ENCODE measurements at regions of chr5 and their contacts with region 1.

Region 1: DNA sequence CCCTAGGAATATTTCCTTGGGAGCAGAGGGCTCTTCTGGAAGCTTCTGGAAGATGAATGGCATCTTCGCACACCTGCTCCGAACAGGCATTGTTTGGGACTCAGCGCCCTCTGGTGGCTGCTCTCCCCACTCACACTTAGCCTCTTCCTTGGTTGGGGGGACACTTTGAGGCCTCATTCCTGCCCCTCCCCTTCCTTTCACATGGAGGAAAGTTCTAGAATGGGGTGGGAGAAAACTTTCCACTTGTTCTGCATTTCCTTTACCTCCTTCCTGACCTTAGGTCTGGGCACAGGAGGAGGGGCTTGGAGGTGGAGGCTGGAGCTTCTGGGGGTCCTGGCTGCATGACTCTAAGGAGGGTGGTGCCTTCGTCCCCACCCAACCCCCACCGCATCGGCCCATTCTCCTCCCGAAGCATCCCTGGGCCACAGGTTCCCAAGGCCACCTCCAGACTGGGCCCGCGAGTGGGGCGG is 19.3 kb upstream of the SMIM32 start:
- DNase-seq: peak; percentile 53
- ATAC-seq: peak; percentile 50 to 58
- H3K4me3 ChIP-seq: no peak overlapping the region
- H3K27ac ChIP-seq: no peak overlapping the region
- H3K4me1 ChIP-seq: no peaks in the 10 kb centered on the region
- H3K27me3 ChIP-seq: peaks cover 19% of the 10 kb centered on the region
- CTCF ChIP-seq: peak; percentile 90

Region 2: DNA sequence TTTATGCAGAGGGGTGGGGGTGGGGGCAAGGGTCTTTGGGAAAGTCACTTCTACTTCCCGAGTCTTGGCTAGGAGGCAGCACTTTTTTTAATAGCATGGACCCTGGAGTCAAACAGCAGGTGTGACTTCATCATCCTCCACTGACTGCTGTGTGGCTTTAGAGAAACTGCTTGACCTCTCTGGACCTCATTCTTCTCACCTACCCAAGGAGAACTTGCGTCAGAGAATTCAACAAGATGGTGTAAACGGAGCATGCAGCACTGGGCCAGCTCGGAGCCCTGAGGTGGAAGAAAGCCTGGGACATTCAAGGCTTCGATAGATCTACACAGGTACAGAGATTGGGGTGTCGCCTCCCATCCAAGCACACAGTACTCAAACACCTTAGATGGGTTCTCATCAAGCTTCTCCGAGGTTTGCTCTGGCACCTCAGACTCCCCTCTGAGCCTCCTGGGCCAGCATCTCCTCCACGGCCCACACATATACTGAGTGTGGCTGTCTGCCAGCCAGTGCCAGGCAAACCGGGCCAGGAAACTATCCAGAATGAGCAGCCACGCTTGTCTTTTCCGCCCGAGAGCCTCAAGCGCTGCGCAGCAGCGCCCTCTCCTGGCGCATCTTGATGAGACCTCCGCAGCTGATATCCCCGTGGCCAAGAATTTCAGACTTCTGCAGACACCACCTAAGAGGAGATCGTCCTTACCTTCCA is 382.5 kb before region 1 on chr5:
- intact Hi-C with region 1: no loop called
- DNase-seq: peak; percentile 71
- ATAC-seq: peak; percentile 52 to 60
- H3K4me3 ChIP-seq: no peak overlapping the region
- H3K27ac ChIP-seq: no peak overlapping the region
- H3K4me1 ChIP-seq: peaks cover 7% of the 10 kb centered on the region
- H3K27me3 ChIP-seq: peaks cover 45% of the 10 kb centered on the region
- CTCF ChIP-seq: peak; percentile 61

Region 3: GRCh38 chr5:135887351-135887864 is 324.9 kb before region 1 on chr5:
- intact Hi-C with region 1: loop called (anchors 5 kb)
- DNase-seq: peak; percentile 56
- ATAC-seq: peak; percentile 87 to 92
- H3K4me3 ChIP-seq: no peak overlapping the region
- H3K27ac ChIP-seq: no peak overlapping the region
- H3K4me1 ChIP-seq: peaks cover 18% of the 10 kb centered on the region
- H3K27me3 ChIP-seq: peaks cover 14% of the 10 kb centered on the region
- CTCF ChIP-seq: peak; percentile 78

Region 4: DNA sequence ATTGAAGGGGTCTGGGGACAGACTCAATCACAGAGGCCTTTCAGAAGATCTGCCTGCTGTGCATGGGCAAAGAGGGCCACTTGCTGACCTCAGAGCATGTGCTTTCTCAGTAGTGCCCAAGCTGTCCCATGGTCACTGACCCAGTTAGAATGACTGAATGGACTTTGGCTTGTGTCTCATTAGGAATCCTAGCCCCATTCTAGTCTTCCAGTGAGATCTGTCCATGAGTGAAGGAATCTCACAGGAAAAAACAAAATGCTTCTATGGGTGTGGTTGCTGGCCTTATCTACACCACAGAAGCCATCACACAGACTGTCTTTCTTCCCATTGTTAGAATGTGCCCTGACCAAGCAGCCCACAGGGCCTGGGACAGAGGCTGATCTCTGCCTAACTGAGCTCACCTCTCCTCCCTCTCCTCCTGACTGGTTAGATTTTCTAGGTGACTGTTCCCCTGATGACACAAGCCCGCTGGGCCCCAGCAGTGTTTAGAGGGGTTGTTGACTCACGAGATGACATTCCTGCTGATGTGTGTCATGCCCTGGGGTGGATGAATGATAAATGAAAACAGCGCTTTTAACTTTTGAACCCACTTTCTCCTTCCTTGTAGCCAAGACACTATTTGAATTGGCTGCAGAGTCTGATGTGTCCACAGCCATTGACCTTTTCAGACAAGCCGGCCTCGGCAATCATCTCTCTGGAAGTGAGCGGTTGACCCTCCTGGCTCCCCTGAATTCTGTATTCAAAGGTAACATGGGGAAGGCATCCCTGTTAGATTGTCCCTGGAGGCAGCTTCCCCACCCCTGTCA is 158.7 kb before region 1 on chr5:
- intact Hi-C with region 1: no loop called
- DNase-seq: no peak
- ATAC-seq: peak; percentile 19 to 62
- H3K4me3 ChIP-seq: no peak overlapping the region
- H3K27ac ChIP-seq: peak overlapping the region; percentile 8
- H3K4me1 ChIP-seq: peaks cover 20% of the 10 kb centered on the region
- H3K27me3 ChIP-seq: no peaks in the 10 kb centered on the region
- CTCF ChIP-seq: no peak